ENCODE measurements at regions of chr15 and their contacts with region 1.

Region 1: GRCh38 chr15:57340682-57341259 is 35.5 kb upstream of the CGNL1 start:
- DNase-seq: peak; percentile 72
- H3K4me3 ChIP-seq: no peak overlapping the region; a peak in 1 of 4 replicates
- H3K27ac ChIP-seq: no peak overlapping the region
- H3K4me1 ChIP-seq: peaks cover 2 to 4% of the 10 kb centered on the region in 2 experiments; a peak in 2 of 4 replicates
- H3K27me3 ChIP-seq: no peaks in the 10 kb centered on the region
- CTCF ChIP-seq: peak; percentile 92
- EP300 ChIP-seq: no peak
- RAD21 ChIP-seq: peak; percentile 98

Region 2: DNA sequence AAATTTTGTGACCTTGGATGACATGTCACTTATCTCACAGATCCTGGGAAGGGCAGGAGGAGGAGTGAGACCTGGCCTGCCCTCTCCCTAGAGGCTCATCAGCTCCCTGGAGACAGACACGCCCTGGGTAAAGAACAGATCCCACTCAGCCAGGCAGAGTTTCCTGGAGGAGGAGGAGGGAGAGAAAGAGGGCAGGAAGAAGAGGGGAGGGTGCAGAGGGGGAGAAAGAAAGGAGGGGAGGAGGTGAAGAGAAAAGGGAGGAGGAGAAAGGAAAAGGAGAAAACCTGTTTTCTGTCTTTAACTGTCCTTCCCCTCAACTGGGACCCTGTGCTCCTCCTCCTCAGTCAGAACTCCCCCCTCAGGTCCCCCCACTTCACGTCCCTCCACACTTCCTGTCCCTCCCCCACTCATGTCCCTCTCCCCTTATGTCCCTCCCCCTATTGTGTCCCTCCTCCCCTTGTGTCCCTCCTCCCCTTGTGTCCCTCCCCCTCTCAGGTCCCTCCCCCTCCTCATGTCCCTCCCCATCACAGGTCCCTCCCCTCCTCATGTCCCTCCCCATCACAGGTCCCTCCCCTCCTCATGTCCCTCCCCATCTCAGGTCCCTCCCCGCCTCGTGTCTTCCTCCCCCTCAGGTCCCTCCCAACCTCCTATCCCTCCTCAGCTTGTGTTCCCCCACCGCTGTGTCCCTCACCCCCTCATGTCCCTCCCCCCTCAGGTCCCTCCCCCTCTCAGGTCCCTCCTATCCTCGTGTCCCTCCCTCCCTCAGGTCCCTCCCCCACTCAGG is 16.8 kb before region 1 on chr15:
- CTCF ChIA-PET with region 1: interaction called, 18 read pairs
- POLR2A ChIA-PET with region 1: no interaction called
- DNase-seq: peak; percentile 62
- H3K4me3 ChIP-seq: no peak overlapping the region
- H3K27ac ChIP-seq: peak overlapping the region; percentile 53 to 73; a peak in 3 of 4 replicates
- H3K4me1 ChIP-seq: peaks cover 8 to 41% of the 10 kb centered on the region in 2 experiments; a peak in 2 of 4 replicates
- H3K27me3 ChIP-seq: no peaks in the 10 kb centered on the region
- CTCF ChIP-seq: no peak
- EP300 ChIP-seq: no peak
- RAD21 ChIP-seq: no peak

Region 3: DNA sequence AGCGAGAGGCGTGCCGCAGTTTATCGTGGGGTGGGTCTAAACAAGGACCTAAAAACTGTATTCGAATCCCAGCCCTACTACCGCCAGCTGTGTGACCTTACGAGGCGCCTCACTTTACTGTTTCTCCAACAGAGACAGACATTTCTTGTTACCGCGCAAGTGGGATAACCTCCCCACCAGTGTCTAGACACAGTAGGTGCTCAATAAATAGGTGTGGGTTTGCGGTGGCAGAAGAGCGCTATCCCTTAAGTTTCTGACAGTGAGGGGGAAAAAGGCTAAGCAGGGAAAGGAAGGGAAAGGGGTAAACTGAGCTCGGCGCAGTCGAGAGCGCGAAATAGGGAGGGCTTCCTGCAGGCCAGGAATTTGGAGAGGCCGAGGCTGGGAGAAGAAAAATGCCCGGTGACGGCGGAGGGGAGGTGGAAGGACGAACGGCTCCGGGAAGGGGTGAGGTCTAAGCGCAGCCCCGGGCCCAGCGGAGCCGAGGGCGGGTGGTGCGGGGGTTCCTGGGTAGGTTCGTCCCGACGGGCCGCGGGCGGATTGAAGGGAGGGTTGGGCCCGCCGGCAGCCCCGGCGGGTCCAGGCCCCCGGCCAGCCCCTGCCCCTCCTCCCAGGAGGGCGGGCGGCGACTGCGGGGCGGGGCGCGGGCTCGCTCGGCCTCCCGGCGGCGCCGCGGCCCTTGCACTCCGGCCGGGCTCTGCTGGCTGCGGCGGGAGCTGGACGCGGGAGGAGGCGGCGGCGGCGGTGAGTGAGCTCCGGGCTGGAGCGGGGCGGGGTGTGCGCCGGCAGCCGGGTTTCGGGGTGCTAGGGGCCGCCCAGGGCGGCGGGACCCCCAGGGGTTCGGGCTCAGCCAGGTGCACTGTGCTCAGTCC is 35.3 kb after region 1 on chr15 and contains the start of gene CGNL1:
- CTCF ChIA-PET with region 1: interaction called, 10 read pairs
- POLR2A ChIA-PET with region 1: no interaction called
- DNase-seq: peak; percentile 91
- H3K4me3 ChIP-seq: peak within 1 kb of the TSS; percentile 59 to 60
- H3K27ac ChIP-seq: no peak within 1 kb of the TSS
- H3K4me1 ChIP-seq: peaks cover 0 to 3% of the 10 kb centered on the region in 2 experiments; a peak in 1 of 4 replicates
- H3K27me3 ChIP-seq: no peaks in the 10 kb centered on the region; the same call in 1 of the 2 replicates
- CTCF ChIP-seq: no peak
- EP300 ChIP-seq: no peak
- RAD21 ChIP-seq: no peak
- polyA plus RNA-seq, gene CGNL1: 0.23 and 0.24 TPM in 2 replicates

Region 4: DNA sequence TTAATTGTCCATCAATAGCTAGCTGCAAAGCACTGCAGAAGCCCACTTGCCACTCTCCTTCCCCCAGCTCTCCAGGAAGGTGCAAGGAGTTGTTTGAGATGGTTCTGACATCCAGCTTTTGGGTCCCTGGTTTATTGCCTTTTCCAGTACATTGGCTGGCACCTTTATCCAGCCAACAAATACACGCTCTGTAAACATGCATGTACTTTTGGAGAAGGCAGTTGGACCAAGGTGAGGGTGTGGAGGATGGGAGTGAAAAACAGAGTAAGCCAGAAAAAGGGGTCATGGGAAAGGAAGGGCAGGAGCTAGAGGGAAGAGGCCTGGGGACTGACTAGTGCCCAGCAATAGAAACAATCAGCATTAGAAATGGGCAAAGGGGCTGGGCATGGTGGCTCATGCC is 138.2 kb after region 1 on chr15:
- CTCF ChIA-PET with region 1: interaction called, 10 read pairs
- POLR2A ChIA-PET with region 1: no interaction called
- DNase-seq: no peak
- H3K4me3 ChIP-seq: no peak overlapping the region
- H3K27ac ChIP-seq: no peak overlapping the region
- H3K4me1 ChIP-seq: no peaks in the 10 kb centered on the region
- H3K27me3 ChIP-seq: no peaks in the 10 kb centered on the region
- CTCF ChIP-seq: no peak
- EP300 ChIP-seq: no peak
- RAD21 ChIP-seq: no peak

Region 5: DNA sequence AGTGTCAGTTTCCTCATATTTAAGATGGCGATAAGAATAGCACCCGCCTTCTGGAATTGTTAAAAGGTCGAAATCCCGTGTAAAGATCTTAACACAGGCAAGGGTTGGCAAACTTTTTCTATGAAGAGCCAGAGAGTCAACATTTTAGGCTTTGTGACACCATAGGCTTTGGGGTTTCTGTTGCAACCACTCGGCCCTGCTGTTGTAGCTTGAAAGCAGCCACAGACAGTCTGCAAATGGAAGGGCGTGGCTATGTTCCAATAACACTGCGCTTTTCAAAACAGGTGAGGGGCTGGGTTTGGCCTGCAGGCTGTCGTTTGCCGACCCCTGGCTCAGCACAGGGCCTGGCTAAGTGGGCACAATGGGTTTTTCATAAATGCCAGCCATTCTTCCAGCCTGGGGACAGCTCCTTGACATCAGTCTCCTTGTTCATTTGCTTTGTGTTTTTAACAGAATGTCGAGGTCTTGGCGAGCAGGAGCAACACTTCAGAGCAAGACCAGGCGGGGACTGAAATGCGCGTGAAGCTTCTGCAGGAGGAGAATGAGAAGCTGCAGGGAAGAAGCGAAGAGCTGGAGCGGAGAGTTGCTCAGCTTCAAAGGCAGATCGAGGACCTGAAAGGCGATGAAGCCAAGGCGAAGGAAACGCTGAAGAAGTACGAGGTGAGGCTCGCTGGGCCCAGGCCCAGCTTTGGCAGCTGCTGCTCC is 175.7 kb after region 1 on chr15:
- CTCF ChIA-PET with region 1: interaction called, 447 read pairs
- POLR2A ChIA-PET with region 1: no interaction called
- DNase-seq: no peak
- H3K4me3 ChIP-seq: no peak overlapping the region
- H3K27ac ChIP-seq: no peak overlapping the region
- H3K4me1 ChIP-seq: peaks cover 0 to 4% of the 10 kb centered on the region in 2 experiments; a peak in 1 of 4 replicates
- H3K27me3 ChIP-seq: no peaks in the 10 kb centered on the region
- CTCF ChIP-seq: no peak
- EP300 ChIP-seq: no peak
- RAD21 ChIP-seq: no peak

Region 6: GRCh38 chr15:57541805-57542504 is 201.2 kb after region 1 on chr15:
- CTCF ChIA-PET with region 1: interaction called, 191 read pairs
- POLR2A ChIA-PET with region 1: no interaction called
- DNase-seq: peak; percentile 68
- H3K4me3 ChIP-seq: peak overlapping the region in 1 of 2 experiments; percentile 17; a peak in 1 of 4 replicates
- H3K27ac ChIP-seq: no peak overlapping the region
- H3K4me1 ChIP-seq: peaks cover 2 to 11% of the 10 kb centered on the region in 2 experiments; a peak in 2 of 4 replicates
- H3K27me3 ChIP-seq: no peaks in the 10 kb centered on the region
- CTCF ChIP-seq: peak; percentile 91
- EP300 ChIP-seq: no peak
- RAD21 ChIP-seq: peak; percentile 72